ENCODE measurements at regions of chr6 and their contacts with region 1.

Region 1: GRCh38 chr6:30914076-30914853 is at the start of gene VARS2:
- DNase-seq: peak; percentile 86 to 95
- ATAC-seq: peak; percentile 87 to 92
- H3K4me3 ChIP-seq: peak within 1 kb of the TSS; percentile 64 to 70 (median 68)
- H3K27ac ChIP-seq: peak within 1 kb of the TSS; percentile 88 to 96 (median 94)
- H3K4me1 ChIP-seq: peaks cover 18 to 26% of the 10 kb centered on the region in 2 donors
- H3K27me3 ChIP-seq: no peaks in the 10 kb centered on the region
- CTCF ChIP-seq: peak; percentile 39 to 68 (median 59)
- POLR2A ChIP-seq: peak; percentile 85 to 89
- total RNA-seq, gene VARS2: 16.0 to 38.5 (median 19.3) TPM

Region 2: GRCh38 chr6:30742316-30743098 is 171.8 kb before region 1 on chr6 and contains the start of gene FLOT1:
- in situ Hi-C with region 1: no loop called
- intact Hi-C with region 1: loop called (anchors 10 kb)
- DNase-seq: peak; percentile 93 to 98
- ATAC-seq: peak; percentile 79 to 84
- H3K4me3 ChIP-seq: peak within 1 kb of the TSS; percentile 63 to 83 (median 74)
- H3K27ac ChIP-seq: peak within 1 kb of the TSS; percentile 86 to 94 (median 86)
- H3K4me1 ChIP-seq: peaks cover 22 to 24% of the 10 kb centered on the region in 2 donors
- H3K27me3 ChIP-seq: no peaks in the 10 kb centered on the region
- CTCF ChIP-seq: peak in 1 of 5 experiments; percentile 8
- POLR2A ChIP-seq: peak; percentile 70 to 71
- total RNA-seq, gene FLOT1: 96.9 to 127 (median 117) TPM

Region 3: DNA sequence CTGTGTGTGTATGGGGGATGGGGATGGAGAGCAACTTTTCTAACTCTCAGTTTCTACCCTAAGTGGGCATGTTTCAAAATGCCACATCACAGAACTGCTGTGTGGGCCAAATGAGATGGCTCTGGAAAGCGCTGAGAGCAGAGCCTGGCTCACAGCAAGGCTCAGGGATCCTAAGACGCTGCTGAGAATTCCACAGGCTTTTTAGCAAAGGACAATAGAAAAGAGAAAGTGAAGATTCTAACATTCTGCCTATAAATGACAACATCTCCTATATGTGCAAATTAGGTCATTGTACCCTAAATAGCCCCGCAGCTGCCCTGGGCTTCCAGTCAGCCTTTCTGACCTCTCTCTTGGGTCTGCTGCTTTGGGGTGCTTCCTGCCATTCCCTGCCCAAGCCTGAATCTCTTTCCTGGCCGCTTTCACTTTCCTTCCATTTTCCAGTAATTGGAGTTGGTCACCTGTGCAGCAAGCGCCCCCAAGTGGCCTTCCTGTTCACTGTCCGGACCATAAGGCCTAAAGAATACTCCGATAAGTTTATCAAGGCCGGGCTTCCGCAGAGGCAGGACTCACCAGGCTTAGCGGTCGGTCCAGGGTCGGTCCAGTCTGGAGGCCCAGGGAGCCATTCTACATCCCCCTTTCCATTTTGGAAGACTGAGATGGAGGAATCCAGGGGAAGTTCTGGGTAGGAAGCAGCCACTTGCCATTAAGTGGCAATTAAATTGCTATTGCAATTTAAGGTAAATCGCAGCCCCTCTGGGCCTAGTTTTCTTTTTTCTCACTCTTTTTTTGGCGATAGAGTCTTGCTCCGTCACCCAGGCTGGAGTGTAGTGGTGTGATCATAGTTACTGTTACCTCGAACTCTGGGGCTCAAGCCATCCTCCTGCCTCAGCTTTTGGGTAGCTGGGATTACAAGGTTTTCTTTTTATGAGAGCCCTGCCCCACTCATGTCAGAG is 36.6 kb before region 1 on chr6:
- in situ Hi-C with region 1: no loop called
- intact Hi-C with region 1: loop called (anchors 5 kb)
- DNase-seq: peak; percentile 74 to 89
- ATAC-seq: peak; percentile 86 to 88
- H3K4me3 ChIP-seq: peak overlapping the region; percentile 40 to 54 (median 41)
- H3K27ac ChIP-seq: peak overlapping the region; percentile 76 to 80 (median 79)
- H3K4me1 ChIP-seq: peaks cover 20 to 33% of the 10 kb centered on the region in 2 donors
- H3K27me3 ChIP-seq: no peaks in the 10 kb centered on the region
- CTCF ChIP-seq: peak; percentile 89 to 92 (median 91)
- POLR2A ChIP-seq: peak in 1 of 2 donors; percentile 11

Region 4: DNA sequence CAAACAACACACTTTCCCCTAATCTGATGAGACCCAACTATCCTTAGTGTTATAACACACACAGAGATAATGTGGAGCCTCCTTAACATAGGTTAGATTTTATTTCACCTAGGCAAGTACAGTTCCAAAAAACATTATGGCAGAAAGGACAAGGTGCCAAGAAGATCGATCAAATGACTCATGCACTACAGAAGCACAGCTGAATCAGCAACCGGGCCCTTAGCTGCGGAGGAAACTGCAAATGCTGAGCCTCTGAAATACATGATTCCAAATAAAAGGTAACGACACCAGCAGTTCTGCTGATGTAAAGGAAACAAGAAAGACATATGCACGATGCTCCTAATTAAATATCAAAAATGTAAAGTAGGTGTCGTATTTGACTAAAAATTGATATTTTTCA is 49.4 kb after region 1 on chr6:
- in situ Hi-C with region 1: no loop called
- intact Hi-C with region 1: no loop called
- DNase-seq: no peak
- ATAC-seq: no peak
- H3K4me3 ChIP-seq: no peak overlapping the region
- H3K27ac ChIP-seq: no peak overlapping the region
- H3K4me1 ChIP-seq: no peaks in the 10 kb centered on the region
- H3K27me3 ChIP-seq: no peaks in the 10 kb centered on the region
- CTCF ChIP-seq: no peak
- POLR2A ChIP-seq: no peak

Region 5: GRCh38 chr6:31068669-31069340 is 154.5 kb after region 1 on chr6:
- in situ Hi-C with region 1: loop called in 2 of 4 experiments (anchors 5 to 10 kb)
- intact Hi-C with region 1: loop called (anchors 1 kb)
- DNase-seq: peak; percentile 45 to 74
- ATAC-seq: peak; percentile 88 to 92
- H3K4me3 ChIP-seq: no peak overlapping the region
- H3K27ac ChIP-seq: no peak overlapping the region
- H3K4me1 ChIP-seq: no peaks in the 10 kb centered on the region
- H3K27me3 ChIP-seq: no peaks in the 10 kb centered on the region
- CTCF ChIP-seq: peak; percentile 73 to 86 (median 82)
- POLR2A ChIP-seq: no peak

Region 6: GRCh38 chr6:31087494-31088089 is 173.3 kb after region 1 on chr6:
- in situ Hi-C with region 1: no loop called
- intact Hi-C with region 1: loop called (anchors 1 kb)
- DNase-seq: peak; percentile 59 to 73
- ATAC-seq: peak; percentile 93 to 99
- H3K4me3 ChIP-seq: peak overlapping the region in 3 of 4 donors; percentile 11 to 36 (median 13)
- H3K27ac ChIP-seq: peak overlapping the region in 3 of 4 donors; percentile 1 to 36 (median 25)
- H3K4me1 ChIP-seq: peaks cover 8 to 9% of the 10 kb centered on the region in 2 donors
- H3K27me3 ChIP-seq: no peaks in the 10 kb centered on the region
- CTCF ChIP-seq: peak; percentile 74 to 82 (median 81)
- POLR2A ChIP-seq: no peak